ENCODE measurements at regions of chrX and their contacts with region 1.

Region 1: DNA sequence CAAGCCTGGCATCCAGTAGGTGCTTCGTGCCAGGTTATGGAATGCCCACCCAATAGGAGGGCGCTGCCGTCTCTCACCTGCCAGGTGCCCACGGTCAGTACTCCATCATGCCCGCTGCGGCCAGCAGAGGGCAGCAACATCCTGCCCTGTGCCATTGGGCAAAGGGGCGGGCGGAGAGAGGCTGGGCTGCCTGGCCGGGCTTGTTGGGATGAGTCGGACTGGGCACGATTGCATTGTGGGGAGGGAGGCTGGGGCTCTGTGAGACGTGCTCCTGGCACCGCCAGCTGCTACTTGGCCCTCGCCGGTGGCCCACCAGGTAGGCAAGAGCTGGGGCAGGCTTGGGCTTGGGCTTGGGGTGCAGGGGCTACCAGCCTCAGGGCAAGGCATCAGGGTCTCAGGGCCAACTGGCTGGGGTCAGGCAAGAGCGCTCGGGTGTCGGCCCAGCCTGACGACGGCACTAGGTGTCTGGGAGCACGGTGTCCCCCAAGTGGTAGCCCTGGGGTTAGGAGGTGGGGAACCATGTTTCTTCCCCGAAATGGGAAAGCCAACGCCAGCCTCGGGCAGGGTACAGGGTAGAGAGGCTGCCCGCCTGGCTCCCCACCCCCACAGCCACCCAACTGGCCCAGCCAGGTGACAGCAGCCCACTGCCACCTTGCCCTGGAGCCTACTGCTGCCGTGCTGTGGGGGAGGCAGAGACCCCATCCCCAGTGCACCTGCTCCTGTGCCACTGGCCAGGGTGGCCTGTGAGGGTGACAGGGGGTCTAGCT is at the start of gene PLXNB3:
- DNase-seq: peak; percentile 86 to 94 (median 92)
- H3K4me3 ChIP-seq: peak within 1 kb of the TSS; percentile 12 to 80 (median 59)
- H3K27ac ChIP-seq: peak within 1 kb of the TSS in 58 of 59 donors; percentile 79 to 99 (median 96)
- H3K27me3 ChIP-seq: peaks cover 0 to 49% (median 0%) of the 10 kb centered on the region in 45 donors
- CTCF ChIP-seq: peak; percentile 59 to 99 (median 92)
- total RNA-seq, gene PLXNB3: 22.2 to 541 (median 140) TPM

Region 2: DNA sequence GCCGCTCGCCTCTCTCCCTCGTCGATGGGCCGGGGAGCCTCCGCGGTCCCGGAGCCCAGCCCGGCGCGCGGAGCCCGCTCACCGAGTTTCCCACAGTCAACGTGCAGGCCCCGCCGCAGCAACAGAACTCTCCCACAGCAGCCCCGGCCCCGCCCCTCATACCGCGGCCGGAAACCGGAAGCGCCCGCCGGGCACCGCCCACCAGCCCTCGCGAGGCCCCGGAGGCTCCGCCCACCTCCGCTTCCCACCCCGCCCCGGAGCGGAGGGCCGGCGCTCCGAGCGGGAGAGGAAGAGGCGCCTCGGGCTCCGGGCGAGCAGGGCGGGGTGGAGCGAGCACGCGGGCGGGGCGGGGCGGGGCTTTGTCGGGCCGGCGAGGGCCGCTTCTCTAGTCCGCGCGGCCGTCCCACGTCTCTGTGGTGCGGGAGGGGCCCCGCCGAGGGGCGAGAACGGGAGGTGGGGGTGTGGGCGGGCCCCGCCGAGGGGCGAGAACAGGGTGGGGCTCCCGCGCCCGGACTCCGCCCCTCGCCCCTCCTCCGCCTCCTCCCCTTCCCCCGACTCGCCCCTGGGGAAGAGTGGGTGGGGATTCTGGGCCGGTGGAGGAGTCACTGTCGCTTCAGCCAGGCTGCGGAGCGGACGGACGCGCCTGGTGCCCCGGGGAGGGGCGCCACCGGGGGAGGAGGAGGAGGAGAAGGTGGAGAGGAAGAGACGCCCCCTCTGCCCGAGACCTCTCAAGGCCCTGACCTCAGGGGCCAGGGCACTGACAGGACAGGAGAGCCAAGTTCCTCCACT is 39.7 kb before region 1 on chrX and contains the starts of genes ABCD1 and BCAP31:
- intact Hi-C with region 1: loop called (anchors 5 kb)
- DNase-seq: peak; percentile 63 to 92 (median 80)
- H3K4me3 ChIP-seq: peak within 1 kb of the TSS; percentile 35 to 76 (median 67)
- H3K27ac ChIP-seq: peak within 1 kb of the TSS in 56 of 59 donors; percentile 23 to 88 (median 78)
- H3K27me3 ChIP-seq: peaks cover 0 to 73% (median 5%) of the 10 kb centered on the region in 45 donors
- CTCF ChIP-seq: no peak
- total RNA-seq, gene ABCD1: 2.4 to 8.3 (median 4.5) TPM
- total RNA-seq, gene BCAP31: 115 to 220 (median 178) TPM

Region 3: GRCh38 chrX:153780678-153781427 is 16.7 kb after region 1 on chrX and contains the start of gene SRPK3:
- intact Hi-C with region 1: loop called in 1 of 2 experiments (anchors 2 kb)
- DNase-seq: no peak
- H3K4me3 ChIP-seq: peak within 1 kb of the TSS in 16 of 59 donors; percentile 2 to 36 (median 19)
- H3K27ac ChIP-seq: peak within 1 kb of the TSS in 57 of 59 donors; percentile 18 to 84 (median 72)
- H3K27me3 ChIP-seq: peaks cover 0 to 76% (median 0%) of the 10 kb centered on the region in 45 donors
- CTCF ChIP-seq: no peak
- total RNA-seq, gene SRPK3: 1.8 to 14.2 (median 6.3) TPM

Region 4: GRCh38 chrX:153794018-153794896 is 30.1 kb after region 1 on chrX and contains the starts of genes IDH3G and SSR4:
- intact Hi-C with region 1: loop called in 1 of 2 experiments (anchors 1 kb)
- DNase-seq: peak; percentile 82 to 93 (median 92)
- H3K4me3 ChIP-seq: peak within 1 kb of the TSS; percentile 49 to 84 (median 70)
- H3K27ac ChIP-seq: peak within 1 kb of the TSS; percentile 63 to 97 (median 91)
- H3K27me3 ChIP-seq: peaks cover 0 to 83% (median 0%) of the 10 kb centered on the region in 45 donors
- CTCF ChIP-seq: peak in 36 of 56 donors; percentile 10 to 66 (median 36)
- total RNA-seq, gene IDH3G: 35.7 to 90.5 (median 70.9) TPM
- total RNA-seq, gene SSR4: 55.7 to 109 (median 84.8) TPM

Region 5: GRCh38 chrX:153927922-153928760 is 164.0 kb after region 1 on chrX:
- intact Hi-C with region 1: loop called (anchors 2 to 5 kb)
- DNase-seq: peak; percentile 88 to 98 (median 94)
- H3K4me3 ChIP-seq: peak overlapping the region; percentile 40 to 76 (median 64)
- H3K27ac ChIP-seq: peak overlapping the region; percentile 55 to 98 (median 94)
- H3K27me3 ChIP-seq: peaks cover 0 to 82% (median 11%) of the 10 kb centered on the region in 45 donors
- CTCF ChIP-seq: peak in 35 of 56 donors; percentile 4 to 50 (median 27)

Region 6: DNA sequence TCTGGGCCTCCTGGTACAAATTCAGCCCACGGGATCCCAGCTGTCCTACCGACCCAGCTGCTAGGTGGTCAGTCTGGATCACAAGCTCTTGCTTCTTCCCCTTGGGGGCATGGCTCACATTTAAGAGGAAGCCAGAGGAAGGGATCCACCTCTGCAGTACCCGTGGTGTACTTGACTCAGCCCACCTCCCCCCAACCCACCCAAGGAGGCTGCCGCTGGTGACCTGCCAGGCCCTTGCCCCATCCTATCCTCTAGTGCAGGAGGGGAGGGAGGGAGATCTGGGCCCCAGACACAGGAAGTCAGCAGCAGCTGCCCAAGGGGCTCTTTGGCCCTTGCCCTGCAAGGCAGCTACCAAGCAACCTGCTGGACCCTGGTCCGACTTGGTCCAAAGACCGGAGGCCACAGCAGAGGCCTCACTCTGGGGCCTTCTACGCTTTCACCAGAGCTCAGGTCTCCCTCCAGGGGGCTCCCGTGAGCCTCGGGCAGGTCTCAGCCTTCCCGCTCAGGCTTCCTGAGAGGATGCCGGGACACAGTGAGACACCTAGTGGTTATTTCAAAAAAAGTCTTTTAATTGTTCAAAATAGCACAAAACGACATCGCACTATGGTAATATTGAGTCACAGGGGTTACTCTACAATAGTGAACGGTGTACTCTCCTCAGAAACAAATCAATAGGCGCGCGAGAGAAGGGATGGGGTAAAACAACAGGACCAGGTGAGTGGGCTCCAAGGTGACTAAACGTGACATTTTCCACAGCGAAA is 183.0 kb after region 1 on chrX:
- intact Hi-C with region 1: loop called (anchors 1 to 2 kb)
- DNase-seq: peak in 8 of 10 donors; percentile 48 to 72 (median 63)
- H3K4me3 ChIP-seq: no peak overlapping the region
- H3K27ac ChIP-seq: peak overlapping the region in 49 of 59 donors; percentile 2 to 85 (median 65)
- H3K27me3 ChIP-seq: peaks cover 0 to 67% (median 9%) of the 10 kb centered on the region in 45 donors
- CTCF ChIP-seq: peak; percentile 51 to 95 (median 86)

Region 7: DNA sequence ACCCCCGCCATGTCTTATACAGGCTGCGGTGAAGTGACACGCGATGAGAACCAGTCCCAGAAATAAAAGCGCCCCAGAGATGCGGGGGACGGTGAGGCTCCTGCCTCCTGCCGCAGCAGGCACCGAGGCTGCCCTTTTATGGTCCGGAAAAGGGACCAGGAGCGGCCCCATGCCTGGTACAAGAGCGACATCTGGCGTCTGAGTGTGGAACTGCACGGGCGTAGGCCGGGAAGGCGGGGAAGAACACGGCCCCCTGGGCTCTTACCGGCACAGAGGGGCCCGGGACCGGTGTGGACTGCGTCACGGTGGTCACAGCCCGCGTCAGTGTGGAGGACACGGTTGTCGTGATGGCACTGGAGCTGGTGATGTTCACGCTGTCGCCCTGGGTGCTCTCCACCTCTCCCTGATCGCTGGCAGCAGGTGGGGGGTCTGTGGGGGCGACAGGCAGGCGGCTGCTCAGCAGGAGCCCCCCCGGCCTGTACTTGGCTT is 189.2 kb after region 1 on chrX:
- intact Hi-C with region 1: loop called in 1 of 2 experiments (anchors 2 kb)
- DNase-seq: peak; percentile 68 to 85 (median 74)
- H3K4me3 ChIP-seq: peak overlapping the region in 3 of 59 donors; percentile 4 to 8 (median 5)
- H3K27ac ChIP-seq: peak overlapping the region in 55 of 59 donors; percentile 2 to 85 (median 65)
- H3K27me3 ChIP-seq: peaks cover 0 to 30% (median 0%) of the 10 kb centered on the region in 45 donors
- CTCF ChIP-seq: peak; percentile 79 to 100 (median 98)

Region 8: GRCh38 chrX:153984351-153985178 is 220.4 kb after region 1 on chrX:
- intact Hi-C with region 1: no loop called
- DNase-seq: peak in 1 of 10 donors; percentile 78
- H3K4me3 ChIP-seq: no peak overlapping the region
- H3K27ac ChIP-seq: peak overlapping the region in 8 of 59 donors; percentile 14 to 63 (median 34)
- H3K27me3 ChIP-seq: peaks cover 0 to 56% (median 6%) of the 10 kb centered on the region in 45 donors
- CTCF ChIP-seq: no peak

Region 9: GRCh38 chrX:154056770-154057241 is 292.6 kb after region 1 on chrX:
- intact Hi-C with region 1: no loop called
- DNase-seq: no peak
- H3K4me3 ChIP-seq: no peak overlapping the region
- H3K27ac ChIP-seq: peak overlapping the region in 2 of 59 donors; percentile 10 to 48
- H3K27me3 ChIP-seq: peaks cover 0 to 62% (median 10%) of the 10 kb centered on the region in 45 donors
- CTCF ChIP-seq: no peak